Lower leg skin (tissue), 4 donors: ENCODE measurements at regions of chr14 and their contacts with region 1.

Region 1: DNA sequence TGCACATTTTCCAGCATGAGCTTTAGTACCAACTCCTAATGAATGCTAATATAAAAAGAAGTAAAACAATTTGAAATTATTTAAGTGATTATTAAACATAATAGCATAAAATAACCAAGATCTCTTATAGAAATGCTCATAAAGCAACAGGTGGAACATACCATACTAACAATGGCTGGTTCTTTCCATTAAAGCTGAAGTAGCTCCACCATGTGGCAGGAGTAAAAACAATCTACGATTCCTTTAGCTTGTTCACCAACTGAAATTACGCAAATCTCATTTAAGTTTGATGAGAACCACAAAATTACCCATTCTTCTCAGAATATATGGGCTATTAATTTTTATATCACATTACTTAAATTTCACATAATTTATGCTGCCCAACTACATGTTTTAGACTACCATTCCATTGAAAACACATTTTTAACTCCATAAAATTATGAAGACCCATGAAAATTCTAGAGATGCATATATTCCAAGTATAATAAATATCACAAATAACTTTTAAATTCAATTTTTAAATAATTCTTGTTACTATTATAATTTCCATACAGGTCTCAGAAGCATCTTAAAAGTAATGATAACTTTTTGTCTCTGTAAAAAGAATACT is 213.6 kb downstream of the DAD1 start:
- DNase-seq: no peak
- H3K4me3 ChIP-seq: no peak overlapping the region
- CTCF ChIP-seq: peak in 1 of 3 donors; percentile 13
- POLR2A ChIP-seq: no peak

Region 2: DNA sequence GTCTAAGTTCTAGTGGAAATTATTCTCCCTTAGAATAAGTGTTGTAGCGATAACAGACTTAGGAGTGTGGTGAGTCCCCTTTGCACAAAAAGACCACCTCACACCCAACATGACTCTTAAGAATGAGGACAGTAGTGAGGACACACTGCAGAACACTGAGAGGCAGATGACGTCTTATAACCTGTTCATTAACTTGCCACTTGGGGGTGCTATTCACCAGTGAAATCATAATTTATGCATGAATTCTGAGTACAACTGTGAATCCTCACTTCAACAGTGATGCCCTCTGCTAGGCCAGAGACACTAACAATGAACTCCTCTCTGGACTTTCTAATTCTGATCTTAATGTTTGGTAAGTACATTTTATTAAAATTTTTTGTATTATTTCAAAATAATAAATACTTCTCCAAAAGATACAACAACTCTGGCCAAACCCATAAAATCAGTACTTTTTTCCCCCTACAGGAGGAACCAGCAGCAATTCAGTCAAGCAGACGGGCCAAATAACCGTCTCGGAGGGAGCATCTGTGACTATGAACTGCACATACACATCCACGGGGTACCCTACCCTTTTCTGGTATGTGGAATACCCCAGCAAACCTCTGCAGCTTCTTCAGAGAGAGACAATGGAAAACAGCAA is 61.1 kb before region 1 on chr14:
- intact Hi-C with region 1: loop called (anchors 10 kb)
- DNase-seq: no peak
- H3K4me3 ChIP-seq: no peak overlapping the region
- CTCF ChIP-seq: no peak
- POLR2A ChIP-seq: no peak

Region 3: GRCh38 chr14:22491683-22492621 is 116.5 kb after region 1 on chr14:
- intact Hi-C with region 1: no loop called
- DNase-seq: no peak
- H3K4me3 ChIP-seq: no peak overlapping the region
- CTCF ChIP-seq: no peak
- POLR2A ChIP-seq: no peak

Region 4: GRCh38 chr14:22536853-22537338 is 161.5 kb after region 1 on chr14:
- intact Hi-C with region 1: no loop called
- DNase-seq: peak; percentile 90 to 91
- H3K4me3 ChIP-seq: no peak overlapping the region
- CTCF ChIP-seq: no peak
- POLR2A ChIP-seq: no peak

Region 5: DNA sequence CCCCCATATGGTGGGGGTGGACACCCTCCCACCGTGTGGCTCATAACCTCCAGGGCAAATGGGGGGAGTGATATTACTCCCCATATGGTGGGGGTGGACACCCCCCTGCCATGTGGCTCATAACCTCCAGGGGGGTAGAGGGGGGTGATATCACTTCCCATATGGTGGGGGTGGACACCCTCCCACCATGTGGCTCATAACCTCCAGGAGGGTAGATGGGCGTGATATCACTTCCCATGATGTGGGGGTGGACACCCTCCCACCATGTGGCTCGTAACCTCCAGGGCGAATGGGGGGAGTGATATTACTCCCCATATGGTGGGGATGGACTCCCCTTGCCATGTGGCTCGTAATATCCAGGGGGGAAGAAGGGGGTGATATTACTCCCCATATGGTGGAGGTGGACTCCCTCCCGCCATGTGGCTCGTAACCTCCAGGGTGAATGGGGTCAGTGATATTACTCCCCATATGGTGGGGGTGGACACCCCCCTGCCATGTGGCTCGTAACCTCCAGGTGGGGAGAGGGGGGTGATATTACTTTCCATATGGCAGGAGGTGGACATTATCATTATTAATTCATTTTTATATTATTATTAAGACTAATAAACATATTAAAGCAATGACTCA is 339.9 kb after region 1 on chr14:
- intact Hi-C with region 1: no loop called
- DNase-seq: no peak
- H3K4me3 ChIP-seq: no peak overlapping the region
- CTCF ChIP-seq: no peak
- POLR2A ChIP-seq: no peak